ENCODE measurements at regions of chr18 and their contacts with region 1.

Region 1: DNA sequence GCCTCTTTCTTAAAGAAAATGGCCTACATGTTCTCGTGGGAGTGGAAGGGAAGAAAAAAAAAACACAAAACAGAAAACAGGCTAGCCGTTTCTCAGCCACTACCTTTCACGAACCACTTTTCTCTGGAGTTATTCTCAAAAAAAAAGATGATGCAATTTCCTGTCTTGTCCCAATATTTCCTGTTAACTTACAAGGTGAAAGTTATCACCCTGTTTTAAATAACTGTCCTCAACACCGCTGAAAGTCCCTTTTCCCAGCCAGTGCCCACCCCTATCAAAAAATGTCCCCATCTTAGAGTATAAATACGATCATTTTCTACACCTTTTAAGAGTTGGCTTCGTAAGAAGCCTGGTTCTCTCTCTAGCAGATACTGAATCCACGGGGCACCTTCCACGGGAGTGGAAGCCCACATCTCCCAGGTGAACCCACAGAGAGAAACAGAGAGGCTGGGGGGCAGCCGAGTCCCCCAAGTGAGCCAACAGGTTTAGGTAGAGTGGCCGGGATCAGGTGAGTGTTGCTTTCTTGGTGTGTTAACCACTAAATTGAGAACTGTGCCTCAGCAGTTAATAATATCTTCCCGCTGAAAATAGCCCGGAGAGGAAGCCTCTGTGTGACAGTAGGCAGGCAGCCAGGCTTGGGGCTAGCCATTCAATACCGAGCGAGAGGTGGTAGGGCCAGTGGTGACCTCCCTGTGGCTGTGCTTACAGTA is 15.9 kb downstream of the SMAD7 start:
- DNase-seq: peak; percentile 73 to 86
- ATAC-seq: peak; percentile 45 to 81 (median 76)
- H3K4me3 ChIP-seq: peak overlapping the region in 7 of 10 donors; percentile 15 to 44 (median 28)
- H3K27ac ChIP-seq: peak overlapping the region; percentile 59 to 96 (median 85)
- H3K4me1 ChIP-seq: peaks cover 79 to 98% (median 96%) of the 10 kb centered on the region in 9 donors
- H3K27me3 ChIP-seq: no peaks in the 10 kb centered on the region
- CTCF ChIP-seq: no peak

Region 2: DNA sequence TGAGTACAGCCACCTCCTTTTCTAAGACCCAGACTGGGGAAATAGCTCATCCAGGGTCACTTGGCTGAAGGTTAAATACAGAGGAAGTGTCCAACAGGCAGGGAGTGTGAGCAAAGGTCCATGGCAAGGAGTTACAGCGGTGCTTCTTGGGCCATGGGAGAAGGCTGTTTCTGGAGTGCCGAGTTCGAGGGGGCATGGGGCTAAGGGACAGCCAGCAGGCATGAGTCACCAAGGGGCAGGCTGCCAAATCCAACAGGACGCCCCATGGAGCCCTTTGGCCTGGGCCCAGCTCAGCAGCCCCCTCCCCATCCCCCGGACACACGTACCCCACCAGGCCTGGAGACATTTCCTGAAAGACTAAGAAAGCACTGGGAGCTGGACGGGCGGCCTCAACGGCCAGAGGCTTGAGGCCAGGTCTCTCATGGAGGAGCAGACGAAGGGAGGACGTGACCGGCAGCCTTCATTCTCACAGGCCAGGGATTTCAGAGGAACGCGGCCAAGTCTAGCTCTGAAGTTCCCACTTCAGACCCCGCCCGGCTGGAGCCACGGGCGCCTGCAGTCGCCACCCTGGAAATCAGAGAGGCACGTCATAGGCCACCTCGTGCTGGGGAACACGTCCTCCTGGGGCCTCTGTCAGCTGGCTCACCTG is 144.5 kb before region 1 on chr18:
- intact Hi-C with region 1: loop called in 1 of 10 experiments (anchors 5 kb)
- DNase-seq: peak; percentile 89 to 93
- ATAC-seq: peak; percentile 72 to 91 (median 89)
- H3K4me3 ChIP-seq: no peak overlapping the region
- H3K27ac ChIP-seq: peak overlapping the region; percentile 68 to 96 (median 92)
- H3K4me1 ChIP-seq: peaks cover 19 to 81% (median 48%) of the 10 kb centered on the region in 9 donors
- H3K27me3 ChIP-seq: no peaks in the 10 kb centered on the region
- CTCF ChIP-seq: no peak